CD4-positive, alpha-beta memory T cell (primary cell): ENCODE measurements at regions of chr18 and their contacts with region 1.

Region 1: DNA sequence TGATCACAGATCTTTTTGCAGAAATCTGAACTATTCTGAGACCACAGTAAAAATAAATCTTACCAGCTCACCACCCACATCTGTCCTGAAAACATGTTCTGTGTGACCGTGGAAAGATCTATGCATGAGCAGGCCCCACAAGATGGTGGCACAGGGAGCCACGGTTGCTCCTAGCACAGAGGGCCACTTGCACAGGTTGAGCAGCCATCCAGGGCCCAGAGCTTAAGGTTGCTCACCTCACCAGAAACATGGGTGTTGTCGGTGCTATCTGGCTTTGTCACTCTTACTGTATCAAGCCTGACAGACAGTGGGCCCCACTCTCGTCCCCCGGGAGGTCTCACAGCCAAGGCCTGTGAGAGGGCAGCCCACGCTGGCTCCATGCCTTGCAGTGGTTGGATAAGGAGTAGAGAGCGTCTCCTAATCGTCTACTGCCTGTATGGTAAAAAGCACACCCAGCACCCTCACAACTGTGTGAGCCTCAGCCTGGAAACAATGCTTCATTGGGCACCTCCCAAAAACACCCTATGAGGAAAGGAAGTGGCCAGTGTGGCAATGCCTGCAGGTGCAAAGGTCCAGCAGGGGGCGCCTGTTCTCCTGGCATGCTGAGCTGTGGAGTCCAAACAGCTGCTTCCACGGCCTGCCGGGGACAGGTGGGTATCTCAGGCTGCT is 19.6 kb downstream of the TUBB6 start:
- DNase-seq: peak; percentile 47 to 59 (median 56)
- H3K4me3 ChIP-seq: no peak overlapping the region
- H3K4me3 Mint-ChIP-seq: no peak overlapping the region
- H3K27ac ChIP-seq: no peak overlapping the region
- H3K27ac Mint-ChIP-seq: peak overlapping the region in 1 of 7 donors; percentile 48
- H3K4me1 ChIP-seq: no peaks in the 10 kb centered on the region
- H3K4me1 Mint-ChIP-seq: peaks cover 0 to 4% (median 1%) of the 10 kb centered on the region in 4 donors
- H3K27me3 ChIP-seq: no peaks in the 10 kb centered on the region
- H3K27me3 Mint-ChIP-seq: no peaks in the 10 kb centered on the region

Region 2: DNA sequence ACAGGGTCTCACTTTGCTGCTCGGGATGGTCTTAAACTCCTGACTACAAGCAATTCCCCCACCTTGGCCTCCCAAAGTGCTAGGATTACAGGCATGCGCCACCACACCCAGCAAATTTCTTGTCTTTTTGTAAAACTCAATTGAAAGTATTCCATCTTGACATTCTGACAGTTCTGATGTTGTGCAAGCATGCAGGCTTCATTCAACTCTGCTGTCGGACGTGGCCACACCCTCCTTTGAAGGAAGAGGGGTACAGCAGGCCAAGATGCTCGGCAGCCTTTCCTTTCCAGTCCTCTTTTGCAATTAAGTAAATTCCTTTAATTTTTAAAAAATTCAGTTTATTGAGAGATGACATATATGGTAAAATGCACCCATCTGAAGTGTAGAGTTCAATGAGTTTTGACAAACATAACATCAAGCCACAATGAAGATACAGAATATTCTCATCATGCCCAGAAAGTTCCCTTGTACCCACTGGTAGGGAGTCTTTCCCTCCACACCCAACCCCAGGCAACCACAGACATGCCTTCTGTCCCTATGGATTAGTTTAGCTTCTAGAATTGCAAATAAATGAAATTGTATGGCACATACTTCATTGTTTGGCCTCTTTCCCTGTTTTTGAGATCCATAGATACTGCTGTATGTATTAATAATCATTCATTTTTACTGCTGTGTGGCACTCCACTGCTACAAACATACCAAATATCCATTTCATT is 13.5 kb after region 1 on chr18:
- CTCF ChIA-PET with region 1: interaction called, 22 read pairs
- POLR2A ChIA-PET with region 1: no interaction called
- intact Hi-C with region 1: no loop called
- DNase-seq: no peak
- H3K4me3 ChIP-seq: no peak overlapping the region
- H3K4me3 Mint-ChIP-seq: no peak overlapping the region
- H3K27ac ChIP-seq: no peak overlapping the region
- H3K27ac Mint-ChIP-seq: no peak overlapping the region
- H3K4me1 ChIP-seq: no peaks in the 10 kb centered on the region
- H3K4me1 Mint-ChIP-seq: no peaks in the 10 kb centered on the region
- H3K27me3 ChIP-seq: no peaks in the 10 kb centered on the region
- H3K27me3 Mint-ChIP-seq: no peaks in the 10 kb centered on the region